ENCODE measurements at regions of chr11 and their contacts with region 1.

Region 1: GRCh38 chr11:62905927-62906531 is 15.1 kb downstream of the CHRM1 start:
- DNase-seq: peak; percentile 69 to 82
- H3K4me3 ChIP-seq: no peak overlapping the region
- H3K27ac ChIP-seq: no peak overlapping the region
- H3K4me1 ChIP-seq: 0 out of 2 replicates have a peak, but pooled peaks cover 7% of the 10 kb centered on the region
- H3K27me3 ChIP-seq: peaks cover 62% of the 10 kb centered on the region
- CTCF ChIP-seq: peak; percentile 99

Region 2: GRCh38 chr11:62855571-62856332 is 50.3 kb before region 1 on chr11:
- CTCF ChIA-PET with region 1: no interaction called
- POLR2A ChIA-PET with region 1: no interaction called
- intact Hi-C with region 1: no loop called
- DNase-seq: peak; percentile 98 to 99
- H3K4me3 ChIP-seq: peak overlapping the region; percentile 97
- H3K27ac ChIP-seq: peak overlapping the region; percentile 85
- H3K4me1 ChIP-seq: peaks cover 37% of the 10 kb centered on the region
- H3K27me3 ChIP-seq: no peaks in the 10 kb centered on the region
- CTCF ChIP-seq: no peak

Region 3: DNA sequence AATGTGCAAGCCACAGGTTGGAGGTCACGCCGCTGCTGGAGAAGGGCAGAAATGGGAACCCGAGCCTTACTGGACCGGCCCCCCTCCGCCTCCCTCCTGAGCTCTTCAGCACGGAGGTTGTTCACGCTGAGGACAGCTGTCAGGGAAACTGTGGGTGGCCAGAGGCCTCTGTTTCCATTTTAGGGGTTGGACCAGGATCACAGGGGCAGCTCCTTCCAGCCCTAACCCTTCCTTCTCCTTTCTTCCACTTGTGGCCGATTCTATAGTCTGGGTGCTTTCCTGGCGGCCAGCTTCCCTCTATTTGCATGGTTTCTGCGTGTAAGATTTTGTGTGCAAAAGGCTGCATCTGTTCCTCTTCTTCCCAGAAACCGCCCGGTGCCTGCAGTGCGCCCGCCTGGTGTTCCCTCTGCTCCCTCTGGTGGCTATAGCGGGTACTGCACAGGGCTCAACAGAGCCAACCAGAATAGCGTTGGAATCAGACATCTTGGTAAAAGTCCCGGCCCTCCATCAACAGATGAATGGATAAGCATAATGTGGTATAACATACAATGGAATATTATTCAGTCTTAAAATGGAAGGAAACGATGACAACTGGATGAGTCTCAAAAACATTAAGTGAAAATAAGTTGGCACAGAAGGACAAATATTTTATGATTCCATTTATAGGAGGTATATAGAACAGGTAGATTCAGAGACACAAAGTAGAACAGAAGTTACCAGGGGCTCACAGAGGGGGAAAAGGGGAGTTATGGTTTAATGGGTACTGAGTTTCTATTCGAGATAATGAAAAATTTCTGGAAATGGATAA is 118.0 kb after region 1 on chr11:
- CTCF ChIA-PET with region 1: interaction called, 11 read pairs
- POLR2A ChIA-PET with region 1: no interaction called
- intact Hi-C with region 1: loop called (anchors 1 kb)
- DNase-seq: peak; percentile 50 to 81
- H3K4me3 ChIP-seq: no peak overlapping the region
- H3K27ac ChIP-seq: no peak overlapping the region
- H3K4me1 ChIP-seq: no peaks in the 10 kb centered on the region
- H3K27me3 ChIP-seq: peaks cover 69% of the 10 kb centered on the region
- CTCF ChIP-seq: peak; percentile 100

Region 4: GRCh38 chr11:63212742-63213141 is 306.7 kb after region 1 on chr11:
- CTCF ChIA-PET with region 1: no interaction called
- POLR2A ChIA-PET with region 1: no interaction called
- intact Hi-C with region 1: loop called (anchors 1 kb)
- DNase-seq: peak in 1 of 2 experiments; percentile 12
- H3K4me3 ChIP-seq: no peak overlapping the region
- H3K27ac ChIP-seq: no peak overlapping the region
- H3K4me1 ChIP-seq: no peaks in the 10 kb centered on the region
- H3K27me3 ChIP-seq: peaks cover 23% of the 10 kb centered on the region; the same call in 1 of the 2 replicates
- CTCF ChIP-seq: peak; percentile 81

Region 5: GRCh38 chr11:63829823-63830489 is 923.9 kb after region 1 on chr11:
- CTCF ChIA-PET with region 1: no interaction called
- POLR2A ChIA-PET with region 1: no interaction called
- intact Hi-C with region 1: loop called (anchors 10 kb)
- DNase-seq: peak in 1 of 2 experiments; percentile 28
- H3K4me3 ChIP-seq: no peak overlapping the region
- H3K27ac ChIP-seq: no peak overlapping the region
- H3K4me1 ChIP-seq: peaks cover 4% of the 10 kb centered on the region; the same call in 1 of the 2 replicates
- H3K27me3 ChIP-seq: no peaks in the 10 kb centered on the region
- CTCF ChIP-seq: peak; percentile 53; the same call in 1 of the 2 replicates

Measured in PC-9 (cell line).